ENCODE measurements at regions of chr18 and their contacts with region 1.

Region 1: GRCh38 chr18:9951022-9951859 is 37.4 kb downstream of the VAPA start:
- DNase-seq: peak; percentile 75 to 80 (median 79)
- H3K4me3 ChIP-seq: no peak overlapping the region
- H3K27ac ChIP-seq: no peak overlapping the region
- H3K4me1 ChIP-seq: peaks cover 0 to 22% (median 4%) of the 10 kb centered on the region in 4 experiments
- H3K27me3 ChIP-seq: no peaks in the 10 kb centered on the region

Region 2: DNA sequence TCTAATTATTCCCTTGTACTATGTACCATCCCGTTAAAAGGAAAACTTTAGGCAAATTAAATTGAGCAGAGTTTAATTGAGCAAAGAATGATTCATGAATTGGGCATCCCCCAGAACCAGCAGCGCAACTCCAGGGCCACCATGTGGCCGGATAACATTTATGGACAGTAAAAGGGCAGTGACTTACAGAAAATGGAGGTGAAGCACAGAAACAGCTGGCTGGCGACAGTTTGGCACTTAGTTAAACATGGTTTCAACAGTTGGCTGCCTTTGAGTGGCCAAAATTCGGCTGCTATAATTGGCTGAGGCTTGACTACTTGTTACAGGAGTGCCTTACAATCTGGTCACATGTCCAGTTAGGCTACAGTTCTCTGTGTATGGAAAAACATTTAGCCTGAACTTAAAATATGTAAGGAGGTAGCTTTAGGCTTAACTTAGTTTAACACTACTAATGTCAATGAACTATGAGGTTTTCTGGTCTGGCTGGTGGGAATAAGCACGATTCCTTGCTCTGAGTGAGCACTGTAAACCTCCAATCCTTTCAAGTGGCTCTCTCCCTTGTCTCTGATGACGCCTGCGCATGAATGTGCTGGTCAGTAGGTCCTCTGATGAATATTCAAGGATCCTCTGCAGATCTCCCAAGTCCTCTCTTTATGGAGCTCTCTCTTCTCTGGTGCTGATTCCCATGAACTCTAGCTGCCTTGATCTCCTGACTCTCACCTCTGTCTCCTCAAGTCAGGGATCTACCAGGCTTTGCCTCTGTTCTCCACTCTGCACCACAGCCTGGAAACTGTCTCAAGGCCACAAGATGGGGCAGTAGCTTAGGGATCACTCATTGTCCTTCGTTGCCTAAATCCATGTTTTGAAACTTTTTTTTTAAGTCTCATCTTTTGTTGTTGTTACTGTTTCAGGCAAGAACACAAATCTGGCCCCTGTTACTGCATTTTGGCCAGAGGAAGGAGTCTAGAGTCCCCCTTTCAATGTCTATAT is 267.5 kb before region 1 on chr18:
- CTCF ChIA-PET with region 1: interaction called, 16 read pairs
- POLR2A ChIA-PET with region 1: no interaction called
- DNase-seq: peak in 2 of 3 donors; percentile 53 to 59
- H3K4me3 ChIP-seq: no peak overlapping the region
- H3K27ac ChIP-seq: peak overlapping the region in 1 of 2 experiments; percentile 72
- H3K4me1 ChIP-seq: peaks cover 6 to 25% (median 18%) of the 10 kb centered on the region in 4 experiments
- H3K27me3 ChIP-seq: no peaks in the 10 kb centered on the region

Region 3: DNA sequence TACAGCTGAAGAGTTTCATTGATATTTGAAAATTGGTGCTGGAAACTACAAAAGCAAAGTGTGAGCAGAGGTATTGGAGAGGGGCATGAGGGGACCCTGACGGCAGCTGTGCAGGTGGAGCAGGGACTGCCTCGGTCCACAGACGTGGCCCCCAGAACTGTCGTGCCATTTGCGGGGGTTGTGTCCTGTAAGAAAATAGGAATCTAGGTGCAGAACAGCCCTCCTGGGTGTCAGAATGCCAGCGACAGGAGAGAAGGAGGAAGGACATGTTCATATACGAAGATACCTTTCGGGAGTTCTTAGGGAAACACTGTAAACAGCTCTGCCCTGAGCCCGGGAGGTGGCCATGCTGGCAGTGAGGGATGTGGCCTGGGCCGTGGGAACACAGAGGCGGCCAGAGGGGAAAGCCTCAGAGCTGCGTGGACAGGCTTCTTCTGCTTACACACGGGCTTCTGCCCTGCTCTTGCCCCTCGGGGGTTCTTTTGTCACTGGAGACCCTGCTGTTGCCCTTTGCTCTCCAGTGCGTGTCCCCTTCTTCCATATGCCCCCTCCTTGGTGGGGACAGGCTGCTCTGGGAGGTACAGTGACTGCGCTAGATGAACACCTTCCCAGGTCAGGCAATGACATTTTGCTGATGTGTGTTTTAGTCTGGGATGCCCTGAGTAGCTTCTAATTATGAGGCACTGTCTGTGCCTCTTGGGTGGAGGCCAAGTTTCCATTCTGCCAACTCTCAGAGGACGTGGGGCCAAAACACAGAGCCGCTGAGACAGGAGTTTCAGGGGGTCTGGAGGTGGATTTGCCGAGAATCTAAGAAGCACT is 147.3 kb before region 1 on chr18:
- CTCF ChIA-PET with region 1: interaction called, 17 read pairs
- POLR2A ChIA-PET with region 1: no interaction called
- DNase-seq: peak in 2 of 3 donors; percentile 18 to 33
- H3K4me3 ChIP-seq: no peak overlapping the region
- H3K27ac ChIP-seq: peak overlapping the region in 1 of 2 experiments; percentile 82
- H3K4me1 ChIP-seq: peaks cover 0 to 5% (median 4%) of the 10 kb centered on the region in 4 experiments
- H3K27me3 ChIP-seq: no peaks in the 10 kb centered on the region

Region 4: DNA sequence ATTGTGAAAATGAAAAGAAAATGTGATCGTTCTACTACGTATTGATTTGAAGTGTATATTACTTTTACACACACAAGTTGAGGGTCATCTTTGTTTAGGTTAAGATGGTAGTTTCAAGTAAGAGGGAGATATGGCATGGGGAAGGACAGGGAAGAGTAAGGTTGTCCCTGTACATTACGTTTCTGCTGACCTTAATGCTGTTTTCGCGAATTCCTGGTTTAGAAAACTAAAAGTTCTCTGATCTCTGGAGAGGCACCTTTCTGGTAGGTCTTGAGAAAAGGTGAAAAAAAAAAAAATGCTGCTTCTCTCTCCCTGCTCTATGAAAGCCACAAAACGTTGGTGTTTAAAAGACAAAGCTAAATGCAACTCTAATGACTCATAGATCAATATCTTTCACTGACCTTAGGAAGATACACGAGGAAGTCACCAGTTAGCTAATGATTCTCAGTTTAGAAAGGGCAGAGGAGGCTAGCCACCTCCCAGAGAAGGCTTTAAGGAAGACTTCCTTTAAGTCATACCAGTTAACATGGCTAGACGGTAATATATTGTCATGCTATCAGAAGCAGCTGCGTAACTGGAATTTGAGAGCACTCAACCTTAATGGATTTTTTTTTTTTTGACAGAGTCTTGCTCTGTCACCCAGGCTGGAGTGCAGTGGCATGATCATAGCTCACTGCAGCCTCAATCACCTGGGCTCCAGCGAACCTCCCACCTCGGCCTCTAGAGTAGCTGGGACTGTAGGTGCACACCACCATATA is 52.3 kb before region 1 on chr18:
- CTCF ChIA-PET with region 1: no interaction called
- POLR2A ChIA-PET with region 1: no interaction called
- DNase-seq: peak in 2 of 3 donors; percentile 33 to 50
- H3K4me3 ChIP-seq: no peak overlapping the region
- H3K27ac ChIP-seq: peak overlapping the region in 1 of 2 experiments; percentile 78
- H3K4me1 ChIP-seq: peaks cover 0 to 8% (median 0%) of the 10 kb centered on the region in 4 experiments
- H3K27me3 ChIP-seq: no peaks in the 10 kb centered on the region

Region 5: DNA sequence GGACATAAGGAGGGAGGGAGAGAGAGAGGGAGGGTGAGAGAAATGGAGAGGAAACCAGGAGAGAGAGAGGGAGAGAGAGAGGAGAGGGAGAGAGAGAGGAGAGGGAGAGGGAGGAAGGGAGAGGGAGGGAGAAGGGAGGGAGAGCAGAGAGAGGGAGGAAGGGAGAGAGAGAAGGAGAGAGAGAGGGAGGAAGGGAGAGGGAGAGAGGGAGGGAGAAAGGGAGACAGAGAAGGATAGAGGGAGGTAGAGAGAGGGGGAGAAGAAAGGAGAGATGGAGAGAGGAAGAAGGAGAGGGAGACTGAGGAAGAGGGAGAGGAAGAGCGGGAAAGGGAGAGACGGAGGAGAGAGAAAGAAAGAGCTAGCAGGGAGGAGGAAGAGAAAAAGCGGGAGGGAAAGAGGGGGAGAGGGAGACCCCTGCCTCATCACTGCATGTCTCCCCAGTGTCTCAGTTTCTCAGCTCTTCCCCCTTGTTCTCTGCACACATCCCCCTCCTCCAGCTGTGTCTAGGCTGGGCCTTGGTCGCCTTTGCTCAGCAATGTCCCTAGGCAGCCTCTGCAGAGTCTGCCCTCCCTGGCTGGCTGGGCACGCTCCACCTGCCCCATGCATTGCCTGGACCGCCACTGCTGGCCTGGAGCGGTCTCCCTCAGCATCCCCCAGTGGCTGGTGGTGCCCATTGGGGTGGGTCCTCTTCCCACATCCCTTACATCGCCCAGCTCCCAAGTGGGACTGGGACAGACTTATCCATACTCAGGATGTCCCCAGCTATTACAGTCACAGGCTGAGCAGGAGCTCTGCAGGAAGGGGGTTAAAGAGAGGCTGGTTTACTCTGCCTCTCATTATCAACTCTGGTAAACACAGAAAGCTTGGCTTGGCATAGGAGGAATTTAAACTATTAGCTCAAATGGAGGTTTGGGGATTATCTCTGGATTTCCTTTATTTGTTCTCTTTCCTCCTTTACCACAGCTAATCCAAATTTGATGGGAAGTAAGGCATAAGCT is 417.5 kb after region 1 on chr18:
- CTCF ChIA-PET with region 1: no interaction called
- POLR2A ChIA-PET with region 1: no interaction called
- DNase-seq: no peak
- H3K4me3 ChIP-seq: no peak overlapping the region
- H3K27ac ChIP-seq: no peak overlapping the region
- H3K4me1 ChIP-seq: no peaks in the 10 kb centered on the region
- H3K27me3 ChIP-seq: no peaks in the 10 kb centered on the region